ENCODE measurements at regions of chr12 and their contacts with region 1.

Region 1: GRCh38 chr12:24778486-24779304 is 170.2 kb downstream of the BCAT1 start:
- DNase-seq: no peak
- H3K4me3 ChIP-seq: no peak overlapping the region
- H3K27ac ChIP-seq: no peak overlapping the region
- H3K4me1 ChIP-seq: no peaks in the 10 kb centered on the region
- H3K27me3 ChIP-seq: no peaks in the 10 kb centered on the region
- CTCF ChIP-seq: peak; percentile 56

Region 2: DNA sequence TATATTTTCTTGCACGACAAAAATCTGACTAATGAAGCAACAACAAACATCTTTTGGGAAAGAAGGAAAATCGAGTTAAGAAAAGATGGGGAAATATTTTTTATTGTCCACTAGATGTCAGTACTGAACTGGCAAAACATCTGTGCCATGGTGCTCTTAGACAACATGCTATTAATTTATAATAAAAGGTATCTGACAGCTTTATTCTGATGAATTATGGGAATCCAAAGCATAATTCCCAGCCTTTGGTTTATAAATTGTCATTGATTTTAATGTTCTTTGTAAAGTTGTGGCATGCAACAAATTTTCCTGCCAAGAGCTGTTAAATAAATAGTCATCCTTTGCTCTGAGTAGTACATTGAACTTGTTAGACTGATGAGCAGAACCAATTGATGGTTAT is 1922.5 kb before region 1 on chr12:
- CTCF ChIA-PET with region 1: no interaction called
- POLR2A ChIA-PET with region 1: no interaction called
- intact Hi-C with region 1: loop called (anchors 2 kb)
- DNase-seq: no peak
- H3K4me3 ChIP-seq: no peak overlapping the region
- H3K27ac ChIP-seq: no peak overlapping the region
- H3K4me1 ChIP-seq: no peaks in the 10 kb centered on the region
- H3K27me3 ChIP-seq: no peaks in the 10 kb centered on the region
- CTCF ChIP-seq: peak; percentile 75

Region 3: GRCh38 chr12:24155042-24155441 is 623.7 kb before region 1 on chr12:
- CTCF ChIA-PET with region 1: no interaction called
- POLR2A ChIA-PET with region 1: no interaction called
- intact Hi-C with region 1: no loop called
- DNase-seq: no peak
- H3K4me3 ChIP-seq: no peak overlapping the region
- H3K27ac ChIP-seq: no peak overlapping the region
- H3K4me1 ChIP-seq: no peaks in the 10 kb centered on the region
- H3K27me3 ChIP-seq: no peaks in the 10 kb centered on the region
- CTCF ChIP-seq: no peak

Measured in PC-9 (cell line).